ENCODE measurements at regions of chr2 and their contacts with region 1.

Region 1: GRCh38 chr2:191171708-191172355 is 21.0 kb upstream of the STAT4 start:
- DNase-seq: no peak
- H3K4me3 Mint-ChIP-seq: no peak overlapping the region
- H3K27ac Mint-ChIP-seq: peak overlapping the region; percentile 16
- H3K4me1 Mint-ChIP-seq: peaks cover 58% of the 10 kb centered on the region
- H3K27me3 Mint-ChIP-seq: no peaks in the 10 kb centered on the region

Region 2: GRCh38 chr2:191128172-191128910 is 43.5 kb before region 1 on chr2:
- CTCF ChIA-PET with region 1: no interaction called
- POLR2A ChIA-PET with region 1: no interaction called
- intact Hi-C with region 1: no loop called
- DNase-seq: no peak
- H3K4me3 Mint-ChIP-seq: peak overlapping the region; percentile 52
- H3K27ac Mint-ChIP-seq: peak overlapping the region; percentile 28
- H3K4me1 Mint-ChIP-seq: peaks cover 70% of the 10 kb centered on the region
- H3K27me3 Mint-ChIP-seq: no peaks in the 10 kb centered on the region

Region 3: GRCh38 chr2:191501561-191502168 is 329.8 kb after region 1 on chr2:
- CTCF ChIA-PET with region 1: interaction called, 19 read pairs
- POLR2A ChIA-PET with region 1: no interaction called
- intact Hi-C with region 1: loop called (anchors 1 kb)
- DNase-seq: no peak
- H3K4me3 Mint-ChIP-seq: no peak overlapping the region
- H3K27ac Mint-ChIP-seq: no peak overlapping the region
- H3K4me1 Mint-ChIP-seq: no peaks in the 10 kb centered on the region
- H3K27me3 Mint-ChIP-seq: peaks cover 5% of the 10 kb centered on the region